ENCODE measurements at regions of chr1 and their contacts with region 1.

Region 1: DNA sequence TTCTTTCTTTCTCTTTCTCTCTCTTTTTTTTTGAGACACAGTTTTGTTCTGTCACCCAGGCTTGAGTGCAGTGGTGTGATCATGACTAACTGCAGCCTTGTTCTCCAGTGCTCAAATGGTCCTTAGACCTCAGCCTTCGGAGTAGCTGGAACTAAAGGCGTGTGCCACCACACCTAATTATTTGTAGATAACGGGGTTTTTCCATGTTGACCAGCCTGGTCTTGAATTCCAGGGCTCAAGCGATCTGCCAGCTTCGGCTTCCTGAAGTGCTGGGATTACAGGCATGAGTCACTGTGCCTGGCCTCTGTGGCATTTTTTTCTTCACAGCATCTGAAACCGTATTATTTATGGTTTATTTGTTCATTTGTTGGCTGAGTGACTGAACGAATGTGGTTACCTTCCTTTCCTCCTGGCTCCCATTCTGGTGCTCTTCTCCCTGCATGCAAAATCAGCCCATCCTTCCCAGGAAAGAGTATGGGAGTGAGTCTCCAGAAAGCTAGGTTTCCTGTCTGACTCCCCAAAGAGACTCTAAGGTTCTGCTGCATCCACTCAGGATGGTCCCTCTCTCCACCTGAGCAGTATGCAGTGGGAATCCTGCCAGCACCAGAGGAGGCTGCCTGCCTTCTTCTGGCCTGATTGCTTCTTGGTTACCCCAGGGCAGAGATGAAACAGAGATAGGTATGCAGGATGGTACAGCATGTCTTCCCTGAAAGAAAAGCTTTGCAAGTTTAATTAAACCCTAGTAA is 155.0 kb upstream of the BEND5 start:
- DNase-seq: peak; percentile 91
- ATAC-seq: peak; percentile 77
- H3K4me3 ChIP-seq: peak overlapping the region; percentile 41; the same call in 1 of the 2 replicates
- H3K27ac ChIP-seq: peak overlapping the region; percentile 76
- H3K4me1 ChIP-seq: peaks cover 28% of the 10 kb centered on the region
- H3K27me3 ChIP-seq: no peaks in the 10 kb centered on the region
- CTCF ChIP-seq: no peak

Region 2: GRCh38 chr1:48556186-48556850 is 375.4 kb before region 1 on chr1:
- CTCF ChIA-PET with region 1: no interaction called
- POLR2A ChIA-PET with region 1: no interaction called
- intact Hi-C with region 1: no loop called
- DNase-seq: peak; percentile 31
- ATAC-seq: peak; percentile 77
- H3K4me3 ChIP-seq: no peak overlapping the region
- H3K27ac ChIP-seq: no peak overlapping the region
- H3K4me1 ChIP-seq: no peaks in the 10 kb centered on the region
- H3K27me3 ChIP-seq: no peaks in the 10 kb centered on the region
- CTCF ChIP-seq: no peak

Region 3: GRCh38 chr1:48878191-48878940 is 53.3 kb before region 1 on chr1:
- CTCF ChIA-PET with region 1: no interaction called
- POLR2A ChIA-PET with region 1: no interaction called
- intact Hi-C with region 1: loop called (anchors 2 kb)
- DNase-seq: peak; percentile 93
- ATAC-seq: peak; percentile 99
- H3K4me3 ChIP-seq: peak overlapping the region; percentile 49; the same call in 1 of the 2 replicates
- H3K27ac ChIP-seq: peak overlapping the region; percentile 75
- H3K4me1 ChIP-seq: peaks cover 25% of the 10 kb centered on the region
- H3K27me3 ChIP-seq: no peaks in the 10 kb centered on the region
- CTCF ChIP-seq: no peak

Region 4: DNA sequence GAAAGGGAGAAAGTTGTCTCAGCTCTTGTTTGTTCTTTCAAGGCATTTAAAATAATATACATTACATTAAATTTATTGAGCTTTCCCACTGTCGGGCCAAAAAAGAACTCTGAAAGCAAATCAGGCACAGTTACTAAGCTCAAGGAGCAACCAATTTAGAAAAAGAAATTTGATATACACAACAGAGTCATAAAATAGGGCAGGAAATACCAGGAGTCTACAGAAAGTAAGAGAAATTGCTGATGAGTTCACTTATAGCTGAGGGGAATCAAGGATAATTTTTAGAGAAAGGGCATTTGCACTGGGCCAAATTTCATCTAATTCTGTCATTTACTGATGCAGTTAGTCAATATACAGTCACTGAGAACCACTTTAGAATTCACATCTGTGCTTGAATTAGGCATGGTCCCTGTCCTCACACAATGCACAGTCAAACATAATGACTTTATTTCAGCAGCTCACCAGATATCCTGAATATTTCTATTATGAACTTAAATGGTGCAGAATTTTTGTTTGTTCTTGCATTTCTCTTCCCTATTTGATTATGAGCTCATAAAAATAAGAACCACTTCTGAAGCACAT is 94.6 kb after region 1 on chr1:
- CTCF ChIA-PET with region 1: no interaction called
- POLR2A ChIA-PET with region 1: no interaction called
- intact Hi-C with region 1: loop called (anchors 2 kb)
- DNase-seq: peak; percentile 31
- ATAC-seq: peak; percentile 85
- H3K4me3 ChIP-seq: no peak overlapping the region
- H3K27ac ChIP-seq: peak overlapping the region; percentile 45
- H3K4me1 ChIP-seq: peaks cover 14% of the 10 kb centered on the region; the same call in 1 of the 2 replicates
- H3K27me3 ChIP-seq: no peaks in the 10 kb centered on the region
- CTCF ChIP-seq: no peak

Region 5: GRCh38 chr1:49163031-49163430 is 231.4 kb after region 1 on chr1:
- CTCF ChIA-PET with region 1: no interaction called
- POLR2A ChIA-PET with region 1: no interaction called
- intact Hi-C with region 1: loop called (anchors 1 kb)
- DNase-seq: peak; percentile 90
- ATAC-seq: peak; percentile 92
- H3K4me3 ChIP-seq: no peak overlapping the region
- H3K27ac ChIP-seq: peak overlapping the region; percentile 52
- H3K4me1 ChIP-seq: peaks cover 28% of the 10 kb centered on the region
- H3K27me3 ChIP-seq: no peaks in the 10 kb centered on the region
- CTCF ChIP-seq: no peak

Region 6: GRCh38 chr1:49323925-49324540 is 392.4 kb after region 1 on chr1:
- CTCF ChIA-PET with region 1: no interaction called
- POLR2A ChIA-PET with region 1: no interaction called
- intact Hi-C with region 1: loop called (anchors 1 kb)
- DNase-seq: no peak
- ATAC-seq: no peak
- H3K4me3 ChIP-seq: no peak overlapping the region
- H3K27ac ChIP-seq: no peak overlapping the region
- H3K4me1 ChIP-seq: peaks cover 30% of the 10 kb centered on the region
- H3K27me3 ChIP-seq: no peaks in the 10 kb centered on the region
- CTCF ChIP-seq: no peak